ENCODE measurements at regions of chr6 and their contacts with region 1.

Region 1: GRCh38 chr6:143026696-143027449 is 33.8 kb upstream of the AIG1 start:
- DNase-seq: no peak
- ATAC-seq: peak; percentile 76
- H3K4me3 ChIP-seq: no peak overlapping the region
- H3K27ac ChIP-seq: no peak overlapping the region
- H3K4me1 ChIP-seq: no peaks in the 10 kb centered on the region
- H3K27me3 ChIP-seq: no peaks in the 10 kb centered on the region
- CTCF ChIP-seq: peak; percentile 50 to 54 (median 50); a peak in 5 of 6 replicates
- EP300 ChIP-seq: no peak
- POLR2A ChIP-seq: no peak
- RAD21 ChIP-seq: peak; percentile 60

Region 2: DNA sequence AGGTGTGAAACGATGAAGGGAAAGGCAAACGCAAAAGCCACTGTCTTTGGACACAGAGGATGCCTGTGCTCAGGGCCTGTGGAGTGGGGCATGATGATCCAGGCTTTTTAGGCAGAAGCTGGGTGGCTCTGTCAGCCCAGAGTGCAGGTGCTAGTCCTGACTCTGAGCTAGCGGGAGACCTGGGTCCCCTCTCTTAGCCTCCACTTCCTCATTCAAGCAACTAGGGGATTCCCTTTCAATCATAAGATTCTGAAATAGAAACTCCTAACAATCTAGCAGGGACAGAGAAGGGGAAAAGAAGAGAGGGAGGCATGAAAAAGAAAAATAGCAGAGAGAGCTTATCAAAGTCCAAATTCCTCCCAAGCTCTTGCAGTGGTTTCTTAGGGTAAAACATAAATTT is 74.3 kb before region 1 on chr6:
- CTCF ChIA-PET with region 1: interaction called, 10 read pairs
- POLR2A ChIA-PET with region 1: no interaction called
- RAD21 ChIA-PET with region 1: interaction called, 20 read pairs
- SMC1A ChIA-PET with region 1: interaction called, 16 read pairs
- in situ Hi-C with region 1: no loop called
- intact Hi-C with region 1: no loop called
- DNase-seq: no peak
- ATAC-seq: peak; percentile 86
- H3K4me3 ChIP-seq: no peak overlapping the region
- H3K27ac ChIP-seq: no peak overlapping the region; the same call in 1 of the 2 replicates
- H3K4me1 ChIP-seq: peaks cover 21% of the 10 kb centered on the region
- H3K27me3 ChIP-seq: no peaks in the 10 kb centered on the region
- CTCF ChIP-seq: 0 out of 6 replicates have a peak, but pooled peaks of 1 of the 3 experiments have one; percentile 7
- EP300 ChIP-seq: peak; percentile 14 to 63; a peak in 1 of 4 replicates
- POLR2A ChIP-seq: no peak
- RAD21 ChIP-seq: peak; percentile 34; the same call in 1 of the 2 replicates

Region 3: DNA sequence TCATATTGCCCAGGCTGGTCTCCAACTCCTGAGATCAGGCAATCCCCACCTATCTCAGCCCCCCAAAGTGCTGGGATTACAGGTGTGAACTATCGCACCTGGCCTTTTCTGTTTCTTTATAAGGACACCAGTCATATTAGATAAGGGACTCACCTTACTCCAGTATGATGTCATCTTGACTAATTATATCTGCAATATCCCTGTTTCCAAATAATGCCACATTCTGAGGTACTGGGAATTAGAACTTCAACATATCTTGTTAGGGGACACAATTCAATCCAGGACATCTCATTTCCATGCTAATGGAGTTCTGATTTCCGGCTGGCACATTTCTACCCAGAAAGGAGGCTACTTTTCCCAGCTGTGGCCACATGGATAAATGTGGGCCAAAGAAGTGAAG is 27.4 kb after region 1 on chr6:
- CTCF ChIA-PET with region 1: no interaction called
- POLR2A ChIA-PET with region 1: no interaction called
- RAD21 ChIA-PET with region 1: no interaction called
- SMC1A ChIA-PET with region 1: no interaction called
- in situ Hi-C with region 1: no loop called
- intact Hi-C with region 1: no loop called
- DNase-seq: no peak
- ATAC-seq: no peak
- H3K4me3 ChIP-seq: no peak overlapping the region
- H3K27ac ChIP-seq: no peak overlapping the region
- H3K4me1 ChIP-seq: no peaks in the 10 kb centered on the region
- H3K27me3 ChIP-seq: no peaks in the 10 kb centered on the region
- CTCF ChIP-seq: no peak
- EP300 ChIP-seq: no peak
- POLR2A ChIP-seq: no peak
- RAD21 ChIP-seq: no peak

Region 4: GRCh38 chr6:143098054-143098671 is 71.3 kb after region 1 on chr6:
- CTCF ChIA-PET with region 1: no interaction called
- POLR2A ChIA-PET with region 1: no interaction called
- RAD21 ChIA-PET with region 1: no interaction called
- SMC1A ChIA-PET with region 1: no interaction called
- in situ Hi-C with region 1: no loop called
- intact Hi-C with region 1: no loop called
- DNase-seq: peak; percentile 32
- ATAC-seq: peak; percentile 94
- H3K4me3 ChIP-seq: peak overlapping the region; percentile 33; the same call in 1 of the 2 replicates
- H3K27ac ChIP-seq: peak overlapping the region; percentile 33; the same call in 1 of the 2 replicates
- H3K4me1 ChIP-seq: peaks cover 12% of the 10 kb centered on the region
- H3K27me3 ChIP-seq: no peaks in the 10 kb centered on the region
- CTCF ChIP-seq: no peak
- EP300 ChIP-seq: 0 out of 4 replicates have a peak, but pooled peaks of 1 of the 2 experiments have one; percentile 27
- POLR2A ChIP-seq: no peak
- RAD21 ChIP-seq: no peak

Region 5: GRCh38 chr6:143164565-143165105 is 137.8 kb after region 1 on chr6:
- CTCF ChIA-PET with region 1: no interaction called
- POLR2A ChIA-PET with region 1: no interaction called
- RAD21 ChIA-PET with region 1: no interaction called
- SMC1A ChIA-PET with region 1: no interaction called
- in situ Hi-C with region 1: no loop called
- intact Hi-C with region 1: no loop called
- DNase-seq: no peak
- ATAC-seq: no peak
- H3K4me3 ChIP-seq: no peak overlapping the region
- H3K27ac ChIP-seq: no peak overlapping the region
- H3K4me1 ChIP-seq: no peaks in the 10 kb centered on the region
- H3K27me3 ChIP-seq: no peaks in the 10 kb centered on the region
- CTCF ChIP-seq: no peak
- EP300 ChIP-seq: no peak
- POLR2A ChIP-seq: no peak
- RAD21 ChIP-seq: no peak

Measured in GM12878 (cell line).